Panc1 (cell line): ENCODE measurements at regions of chr5 and their contacts with region 1.

Region 1: GRCh38 chr5:79133657-79134451 is 22.2 kb downstream of the BHMT start:
- DNase-seq: peak; percentile 78
- ATAC-seq: peak; percentile 82
- H3K4me3 ChIP-seq: peak overlapping the region; percentile 21 to 41
- H3K27ac ChIP-seq: peak overlapping the region; percentile 59; the same call in 1 of the 2 replicates
- H3K4me1 ChIP-seq: peaks cover 7% of the 10 kb centered on the region
- H3K27me3 ChIP-seq: no peaks in the 10 kb centered on the region
- CTCF ChIP-seq: peak; percentile 92

Region 2: DNA sequence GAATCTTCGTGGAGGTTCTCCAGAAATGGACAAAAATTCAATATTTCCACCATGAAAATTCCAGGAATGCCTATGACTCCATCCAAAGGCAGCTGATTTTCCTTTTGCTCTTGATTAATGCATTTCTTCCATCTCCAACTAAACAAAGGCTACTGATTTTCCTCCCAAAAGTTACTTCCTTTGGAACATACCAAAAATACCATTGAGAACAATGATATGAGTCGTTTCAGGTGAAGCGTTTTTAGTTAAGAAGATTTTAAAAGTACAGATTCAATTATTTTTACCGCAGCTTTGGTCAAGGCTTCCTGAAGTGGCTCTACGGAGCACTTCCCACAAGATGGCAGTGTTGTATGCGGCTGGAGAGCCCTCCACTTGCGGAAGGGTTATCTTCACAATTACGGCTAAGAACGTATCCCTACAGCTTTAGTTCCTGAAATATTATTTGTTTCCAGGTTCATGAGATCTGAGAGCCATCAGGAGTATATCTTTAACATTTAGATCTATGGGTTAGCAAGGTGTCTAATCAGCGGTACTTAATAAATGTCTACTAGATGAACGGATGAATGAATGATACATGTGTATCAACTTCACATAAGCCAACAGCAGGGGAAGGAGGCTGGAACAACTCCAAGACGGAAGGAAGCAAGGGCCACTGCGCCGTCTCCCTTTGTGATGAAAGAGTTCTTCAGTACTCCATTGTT is 112.8 kb before region 1 on chr5:
- CTCF ChIA-PET with region 1: interaction called, 94 read pairs
- POLR2A ChIA-PET with region 1: interaction called, 6 read pairs
- in situ Hi-C with region 1: no loop called
- intact Hi-C with region 1: loop called (anchors 1 kb)
- DNase-seq: peak; percentile 42
- ATAC-seq: peak; percentile 87
- H3K4me3 ChIP-seq: no peak overlapping the region
- H3K27ac ChIP-seq: no peak overlapping the region
- H3K4me1 ChIP-seq: 0 out of 2 replicates have a peak, but pooled peaks cover 3% of the 10 kb centered on the region
- H3K27me3 ChIP-seq: peaks cover 39% of the 10 kb centered on the region; the same call in 1 of the 2 replicates
- CTCF ChIP-seq: peak; percentile 93

Region 3: DNA sequence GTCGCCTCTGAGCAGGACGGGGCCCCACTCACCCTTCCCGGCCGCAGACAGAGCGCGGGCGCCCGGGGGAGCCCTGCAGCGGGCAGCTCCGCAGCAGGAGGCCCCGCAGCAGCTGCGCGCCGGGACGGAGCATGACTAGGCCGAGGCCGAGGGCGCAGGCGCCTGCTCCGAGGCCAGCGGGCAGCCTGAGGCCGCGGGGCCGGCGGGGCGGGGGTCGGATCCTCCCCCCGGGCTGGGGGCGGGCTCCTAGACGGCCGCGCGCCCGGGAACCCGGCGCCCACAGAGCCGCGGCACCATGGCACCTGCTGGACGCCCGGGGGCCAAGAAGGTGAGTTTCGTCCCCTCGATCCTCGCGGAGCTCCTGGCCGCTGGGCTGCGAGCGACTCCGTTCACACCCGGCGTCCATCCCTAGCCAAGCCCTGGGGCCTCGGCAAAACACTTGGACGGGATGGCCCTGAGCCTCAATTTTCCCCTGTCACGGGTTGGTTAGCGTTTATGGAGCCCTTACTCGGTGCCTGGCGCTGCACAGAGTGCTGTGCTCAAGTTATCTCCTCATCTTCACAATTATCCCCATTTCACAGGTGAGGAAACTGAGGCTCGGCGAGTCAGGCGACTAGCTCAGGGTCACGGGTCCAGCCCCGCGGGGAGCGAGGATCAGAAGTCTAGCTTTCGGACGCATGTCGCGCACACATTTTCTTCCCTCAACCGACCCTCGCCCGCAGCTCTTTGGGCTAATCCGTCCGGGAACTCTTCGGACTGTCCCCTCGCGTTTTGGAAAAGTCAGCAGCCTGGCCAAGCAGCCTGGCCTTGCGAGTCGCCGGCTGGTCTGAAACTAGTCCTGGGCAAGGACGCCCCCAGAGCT is 64.1 kb before region 1 on chr5 and contains the starts of genes BHMT2 and DMGDH:
- CTCF ChIA-PET with region 1: interaction called, 11 read pairs
- POLR2A ChIA-PET with region 1: no interaction called
- in situ Hi-C with region 1: no loop called
- intact Hi-C with region 1: no loop called
- DNase-seq: no peak
- ATAC-seq: no peak
- H3K4me3 ChIP-seq: no peak within 1 kb of the TSS
- H3K27ac ChIP-seq: no peak within 1 kb of the TSS
- H3K4me1 ChIP-seq: no peaks in the 10 kb centered on the region
- H3K27me3 ChIP-seq: peaks cover 7% of the 10 kb centered on the region
- CTCF ChIP-seq: no peak
- total RNA-seq, gene BHMT2: not detected
- total RNA-seq, gene DMGDH: 0.54 TPM

Region 4: DNA sequence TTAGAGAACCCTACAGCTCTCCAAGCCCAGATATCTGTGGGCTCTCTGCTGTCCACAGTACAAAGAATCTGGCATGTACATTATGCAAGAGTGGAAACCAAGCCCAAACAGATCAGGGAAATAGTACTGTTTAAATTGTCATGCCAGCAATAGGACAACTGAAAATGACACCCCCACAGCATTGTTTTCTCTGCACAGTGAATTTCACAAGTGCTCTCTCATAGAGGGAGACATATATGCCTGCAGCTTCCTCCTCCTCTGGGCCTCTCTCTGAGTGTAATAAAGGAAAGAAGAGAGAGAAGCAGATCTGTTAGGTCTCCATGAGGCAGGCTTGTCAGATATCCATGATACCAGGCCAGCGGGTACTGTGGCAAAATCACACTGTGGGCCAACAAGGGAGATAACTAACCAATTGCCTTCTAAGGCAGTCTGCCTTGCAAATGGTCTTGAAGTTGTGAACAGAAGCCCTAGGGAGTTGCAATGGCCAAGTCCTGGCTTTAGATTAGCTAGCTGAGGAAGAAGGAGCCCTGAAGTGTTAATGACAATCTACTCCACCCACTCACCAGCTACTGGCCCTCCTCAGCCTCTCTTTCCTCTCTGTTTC is 47.7 kb after region 1 on chr5:
- CTCF ChIA-PET with region 1: no interaction called
- POLR2A ChIA-PET with region 1: no interaction called
- in situ Hi-C with region 1: no loop called
- intact Hi-C with region 1: no loop called
- DNase-seq: no peak
- ATAC-seq: no peak
- H3K4me3 ChIP-seq: no peak overlapping the region
- H3K27ac ChIP-seq: no peak overlapping the region
- H3K4me1 ChIP-seq: no peaks in the 10 kb centered on the region
- H3K27me3 ChIP-seq: no peaks in the 10 kb centered on the region; the same call in 1 of the 2 replicates
- CTCF ChIP-seq: no peak

Region 5: DNA sequence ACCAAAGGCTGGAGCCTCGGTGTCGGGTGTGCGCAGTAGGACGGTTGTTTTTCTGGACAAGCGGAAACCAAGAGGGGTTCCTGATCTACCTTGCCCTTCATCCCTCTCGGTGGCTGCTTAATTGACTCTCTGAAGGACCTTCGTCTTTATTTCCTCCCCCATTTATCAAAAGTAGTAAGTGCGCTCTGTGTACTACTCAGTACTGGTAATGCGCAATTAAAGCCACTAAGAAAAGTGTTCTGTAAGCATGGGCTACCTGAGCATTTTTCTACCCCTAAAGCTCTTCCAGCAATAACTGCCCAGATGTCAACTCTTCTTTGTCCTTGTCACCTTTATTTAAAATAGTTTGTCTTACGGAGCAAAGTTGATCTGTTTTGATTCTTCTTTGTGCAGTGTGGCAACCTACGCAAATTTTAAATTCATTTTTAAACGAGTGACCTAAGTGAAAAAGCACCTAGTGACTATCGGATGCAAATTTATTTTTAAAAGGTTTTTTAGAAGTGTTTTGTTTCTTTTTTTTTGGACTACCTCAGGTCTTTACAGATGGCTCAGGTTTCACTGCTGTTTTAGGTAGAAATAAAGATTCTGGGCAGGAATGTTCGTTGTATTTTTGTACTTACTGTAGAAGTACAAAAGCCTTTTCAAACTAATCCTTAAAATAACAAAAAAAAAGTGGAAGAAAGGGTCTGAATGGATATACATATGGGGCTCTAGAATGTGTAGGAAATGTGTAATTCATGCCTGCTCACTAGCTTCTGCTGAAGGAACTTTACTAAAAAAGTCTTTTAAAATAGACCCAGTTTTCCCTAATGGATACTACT is 104.1 kb after region 1 on chr5:
- CTCF ChIA-PET with region 1: interaction called, 12 read pairs
- POLR2A ChIA-PET with region 1: no interaction called
- in situ Hi-C with region 1: no loop called
- intact Hi-C with region 1: no loop called
- DNase-seq: no peak
- ATAC-seq: peak; percentile 6; the same call in 1 of the 2 replicates
- H3K4me3 ChIP-seq: peak overlapping the region; percentile 76 to 84
- H3K27ac ChIP-seq: peak overlapping the region; percentile 77
- H3K4me1 ChIP-seq: peaks cover 12% of the 10 kb centered on the region
- H3K27me3 ChIP-seq: no peaks in the 10 kb centered on the region
- CTCF ChIP-seq: no peak

Region 6: DNA sequence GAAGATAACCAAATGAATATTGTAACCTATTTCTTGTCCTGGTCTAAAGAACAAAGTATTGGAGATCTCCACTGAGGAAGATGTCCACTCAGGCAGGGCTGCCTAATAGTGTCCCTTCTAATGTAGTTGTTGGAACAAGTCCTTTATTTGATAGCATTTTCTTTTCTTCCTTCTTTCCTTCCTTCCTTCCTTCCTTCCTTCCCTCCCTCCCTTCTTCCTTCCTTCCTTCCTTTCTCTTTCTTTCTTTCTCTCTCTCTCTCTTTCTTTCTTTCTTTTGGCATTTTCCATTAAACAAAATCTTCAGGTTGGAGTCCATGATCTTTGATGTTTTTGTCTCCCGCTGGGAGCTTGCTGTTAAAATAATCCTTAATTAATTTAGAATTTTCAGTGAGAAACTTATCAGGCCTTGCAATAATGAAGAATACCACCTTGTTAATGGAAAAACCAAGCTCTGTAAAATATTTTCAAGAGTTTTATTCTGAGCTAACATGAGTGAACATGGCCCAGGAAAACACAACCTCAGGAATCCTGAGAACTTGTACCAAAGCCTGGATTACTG is 434.9 kb after region 1 on chr5:
- CTCF ChIA-PET with region 1: no interaction called
- POLR2A ChIA-PET with region 1: interaction called, 12 read pairs
- in situ Hi-C with region 1: no loop called
- intact Hi-C with region 1: no loop called
- DNase-seq: no peak
- ATAC-seq: no peak
- H3K4me3 ChIP-seq: no peak overlapping the region
- H3K27ac ChIP-seq: no peak overlapping the region
- H3K4me1 ChIP-seq: no peaks in the 10 kb centered on the region
- H3K27me3 ChIP-seq: no peaks in the 10 kb centered on the region
- CTCF ChIP-seq: no peak